ENCODE measurements at regions of chr4 and their contacts with region 1.

Region 1: GRCh38 chr4:87848622-87849351 is 16.0 kb downstream of the MEPE start:
- DNase-seq: no peak
- ATAC-seq: peak; percentile 60 to 85 (median 72)
- H3K4me3 ChIP-seq: peak overlapping the region; percentile 26
- H3K27ac ChIP-seq: no peak overlapping the region
- H3K4me1 ChIP-seq: no peaks in the 10 kb centered on the region
- H3K27me3 ChIP-seq: no peaks in the 10 kb centered on the region
- CTCF ChIP-seq: peak; percentile 57

Region 2: GRCh38 chr4:87354168-87355102 is 494.4 kb before region 1 on chr4:
- intact Hi-C with region 1: loop called in 1 of 2 experiments (anchors 5 kb)
- DNase-seq: no peak
- ATAC-seq: peak in 2 of 4 donors; percentile 20 to 46
- H3K4me3 ChIP-seq: no peak overlapping the region
- H3K27ac ChIP-seq: no peak overlapping the region
- H3K4me1 ChIP-seq: no peaks in the 10 kb centered on the region
- H3K27me3 ChIP-seq: no peaks in the 10 kb centered on the region
- CTCF ChIP-seq: no peak

Region 3: GRCh38 chr4:87551361-87551760 is 297.4 kb before region 1 on chr4:
- intact Hi-C with region 1: loop called in 1 of 2 experiments (anchors 5 kb)
- DNase-seq: no peak
- ATAC-seq: no peak
- H3K4me3 ChIP-seq: no peak overlapping the region
- H3K27ac ChIP-seq: no peak overlapping the region
- H3K4me1 ChIP-seq: no peaks in the 10 kb centered on the region
- H3K27me3 ChIP-seq: no peaks in the 10 kb centered on the region
- CTCF ChIP-seq: no peak

Region 4: GRCh38 chr4:87973283-87974169 is 124.7 kb after region 1 on chr4:
- intact Hi-C with region 1: loop called in 1 of 2 experiments (anchors 5 kb)
- DNase-seq: peak in 1 of 2 donors; percentile 35
- ATAC-seq: peak in 3 of 4 donors; percentile 56 to 70 (median 65)
- H3K4me3 ChIP-seq: no peak overlapping the region
- H3K27ac ChIP-seq: no peak overlapping the region
- H3K4me1 ChIP-seq: no peaks in the 10 kb centered on the region
- H3K27me3 ChIP-seq: no peaks in the 10 kb centered on the region
- CTCF ChIP-seq: peak; percentile 84

Region 5: GRCh38 chr4:88514557-88515511 is 666.0 kb after region 1 on chr4:
- intact Hi-C with region 1: loop called (anchors 5 to 10 kb)
- DNase-seq: no peak
- ATAC-seq: no peak
- H3K4me3 ChIP-seq: no peak overlapping the region
- H3K27ac ChIP-seq: no peak overlapping the region
- H3K4me1 ChIP-seq: no peaks in the 10 kb centered on the region
- H3K27me3 ChIP-seq: peaks cover 0 to 2% (median 0%) of the 10 kb centered on the region in 3 donors
- CTCF ChIP-seq: no peak

Region 6: DNA sequence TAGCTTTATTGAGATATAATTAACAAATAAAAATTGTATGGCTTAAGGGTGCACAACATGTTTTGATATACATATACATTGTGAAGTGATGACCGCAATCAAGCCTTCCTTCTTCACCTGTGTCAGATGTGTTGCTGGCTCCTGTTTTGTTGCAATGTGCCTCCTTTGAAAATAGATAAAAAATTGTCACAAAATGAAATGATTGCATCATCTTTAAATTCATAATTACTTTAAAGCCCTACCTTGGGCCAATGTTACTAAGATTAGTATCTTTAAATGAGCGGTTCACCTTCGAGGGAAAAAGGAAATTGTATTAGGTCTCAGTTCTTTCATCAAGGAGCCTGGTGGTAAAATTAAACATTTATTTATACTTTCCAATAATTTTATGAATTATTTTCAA is 1381.5 kb after region 1 on chr4:
- intact Hi-C with region 1: no loop called
- DNase-seq: no peak
- ATAC-seq: no peak
- H3K4me3 ChIP-seq: no peak overlapping the region
- H3K27ac ChIP-seq: no peak overlapping the region
- H3K4me1 ChIP-seq: no peaks in the 10 kb centered on the region
- H3K27me3 ChIP-seq: no peaks in the 10 kb centered on the region
- CTCF ChIP-seq: no peak